BJ (cell line): ENCODE measurements at regions of chr14 and their contacts with region 1.

Region 1: GRCh38 chr14:67943947-67944346 is 124.4 kb downstream of the RAD51B start:
- DNase-seq: no peak
- H3K4me3 ChIP-seq: no peak overlapping the region
- H3K27me3 ChIP-seq: no peaks in the 10 kb centered on the region
- CTCF ChIP-seq: peak; percentile 59

Region 2: DNA sequence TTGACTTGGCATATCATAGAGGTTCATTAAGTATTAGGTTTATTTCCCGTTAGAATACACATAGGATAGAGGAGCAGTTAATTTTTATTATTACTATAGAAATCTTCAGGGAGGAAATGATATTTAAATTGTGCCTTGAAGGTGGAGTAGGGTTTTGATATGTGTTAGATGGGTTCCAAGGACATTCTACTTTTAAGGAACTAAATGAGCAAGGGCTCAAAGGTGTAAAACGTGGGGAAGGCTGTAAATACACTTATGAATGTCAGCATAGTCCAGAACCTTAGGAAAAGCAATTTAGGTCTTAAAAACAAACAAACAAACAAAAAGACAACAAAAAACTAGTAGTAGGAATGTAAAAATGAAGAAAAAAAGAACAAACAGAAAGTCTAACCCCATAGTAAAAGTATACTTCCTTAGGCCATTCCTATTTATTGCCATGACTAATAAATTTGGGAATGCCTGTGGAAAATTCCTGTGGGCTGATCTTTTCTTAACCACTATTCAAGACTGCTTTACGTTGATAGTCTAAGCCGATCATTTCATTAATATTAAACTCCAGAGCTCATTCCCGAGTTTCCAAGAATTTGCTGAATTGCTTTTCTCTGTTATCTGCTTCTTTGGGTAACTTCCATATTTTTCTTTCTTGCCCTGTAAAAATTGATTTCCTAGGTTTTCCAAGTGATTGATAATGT is 55.9 kb after region 1 on chr14:
- CTCF ChIA-PET with region 1: no interaction called
- POLR2A ChIA-PET with region 1: no interaction called
- DNase-seq: peak; percentile 76
- H3K4me3 ChIP-seq: no peak overlapping the region
- H3K27me3 ChIP-seq: no peaks in the 10 kb centered on the region
- CTCF ChIP-seq: no peak

Region 3: GRCh38 chr14:68248481-68249255 is 304.7 kb after region 1 on chr14:
- CTCF ChIA-PET with region 1: interaction called, 27 read pairs
- POLR2A ChIA-PET with region 1: no interaction called
- DNase-seq: no peak
- H3K4me3 ChIP-seq: no peak overlapping the region
- H3K27me3 ChIP-seq: no peaks in the 10 kb centered on the region
- CTCF ChIP-seq: peak; percentile 53